HepG2 (cell line): ENCODE measurements at regions of chr16 and their contacts with region 1.

Region 1: DNA sequence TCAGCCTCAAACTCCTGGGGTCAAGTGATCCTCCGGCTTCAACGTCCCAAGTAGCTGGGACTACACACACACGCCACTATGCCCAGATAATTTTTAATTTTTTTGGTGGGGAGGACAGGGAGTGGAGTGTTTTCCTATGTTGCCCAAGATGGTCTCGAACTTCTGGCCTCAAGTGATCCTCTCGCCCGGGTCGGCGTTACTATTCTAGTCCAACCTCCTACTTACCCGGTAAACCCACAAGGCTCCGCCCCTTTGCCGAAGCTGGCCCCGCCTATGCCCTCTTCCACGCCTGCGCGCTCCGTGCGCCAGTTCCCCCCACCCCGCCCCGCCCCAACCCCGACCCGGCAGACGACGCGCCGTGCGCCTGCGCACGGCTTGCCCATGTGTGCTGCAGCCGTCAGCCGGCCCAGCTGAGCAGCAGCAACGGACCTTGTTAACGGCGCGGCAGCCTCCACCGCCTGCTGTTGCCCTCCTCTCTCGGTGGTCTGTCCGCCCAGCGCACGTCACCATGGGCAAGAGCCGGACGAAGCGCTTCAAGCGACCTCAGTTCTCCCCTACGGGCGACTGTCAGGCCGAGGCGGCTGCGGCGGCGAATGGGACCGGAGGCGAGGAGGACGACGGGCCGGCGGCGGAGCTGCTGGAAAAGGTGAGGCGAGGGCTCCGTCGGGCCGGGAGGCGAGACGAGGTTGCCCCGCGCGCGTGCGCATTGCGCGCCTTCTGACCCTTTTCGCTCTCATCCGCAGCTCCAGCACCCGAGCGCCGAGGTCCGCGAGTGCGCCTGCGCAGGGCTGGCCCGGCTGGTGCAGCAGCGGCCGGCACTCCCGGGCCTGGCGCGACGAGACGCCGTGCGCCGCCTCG is at the start of gene HEATR3:
- DNase-seq: peak; percentile 88
- ATAC-seq: peak; percentile 96
- H3K4me3 ChIP-seq: peak within 1 kb of the TSS; percentile 75 to 99 (median 79)
- H3K27ac ChIP-seq: peak within 1 kb of the TSS; percentile 95
- H3K4me1 ChIP-seq: peaks cover 32% of the 10 kb centered on the region
- H3K27me3 ChIP-seq: no peaks in the 10 kb centered on the region; a peak in 1 of 5 replicates
- CTCF ChIP-seq: no peak; the same call in 1 of the 2 replicates
- EP300 ChIP-seq: no peak
- POLR2A ChIP-seq: peak; percentile 69 to 92; a peak in 3 of 4 replicates
- RAD21 ChIP-seq: peak; percentile 71
- total RNA-seq, gene HEATR3: 52.4 and 60.2 TPM in 2 replicates

Region 2: DNA sequence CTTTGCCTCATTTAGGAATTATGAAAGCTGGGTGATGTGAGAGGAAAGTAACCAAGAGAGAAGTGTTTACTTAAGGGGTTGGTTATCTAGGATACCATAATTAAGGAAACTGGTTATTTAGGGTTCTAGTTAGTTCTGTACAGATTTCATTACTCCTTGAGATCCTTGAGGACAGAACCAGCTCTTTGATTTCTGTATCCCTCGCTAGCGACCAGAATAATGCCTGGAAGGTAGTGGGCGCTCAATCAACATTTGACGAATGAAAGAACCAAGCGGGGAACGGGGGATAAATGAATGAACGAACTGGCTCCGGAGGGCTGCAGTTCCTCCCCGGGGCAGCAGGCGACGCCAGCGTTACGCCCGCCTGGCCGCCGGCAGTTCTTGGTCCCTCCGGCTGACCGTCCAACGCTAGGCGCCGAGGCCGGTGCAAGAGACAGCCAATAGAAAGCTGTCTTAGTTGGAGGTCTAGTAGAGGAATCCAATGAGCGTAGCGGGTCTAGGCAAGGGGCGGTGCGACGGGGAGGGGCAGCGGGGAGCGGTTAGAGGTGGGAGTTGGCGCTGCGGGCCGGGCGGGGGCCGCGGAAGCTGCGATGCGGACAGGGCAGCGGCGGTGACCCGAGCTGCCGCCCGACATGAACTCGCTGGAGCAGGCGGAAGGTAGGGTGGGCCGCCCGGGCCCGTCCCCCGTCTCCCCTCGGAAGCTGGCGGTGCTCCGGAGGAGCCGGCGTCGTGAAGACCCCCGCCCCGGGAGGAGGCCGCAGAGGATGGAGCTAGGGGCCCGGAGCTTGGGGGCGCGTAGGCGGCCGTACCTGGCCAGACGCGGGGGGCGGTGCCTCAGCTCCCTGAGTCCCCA is 40.9 kb before region 1 on chr16 and contains the start of gene CNEP1R1:
- CTCF ChIA-PET with region 1: interaction called, 11 read pairs
- POLR2A ChIA-PET with region 1: interaction called, 24 read pairs
- in situ Hi-C with region 1: no loop called
- intact Hi-C with region 1: loop called (anchors 1 kb)
- DNase-seq: peak; percentile 97
- ATAC-seq: peak; percentile 97
- H3K4me3 ChIP-seq: peak within 1 kb of the TSS; percentile 71 to 96 (median 85)
- H3K27ac ChIP-seq: peak within 1 kb of the TSS; percentile 56
- H3K4me1 ChIP-seq: peaks cover 44% of the 10 kb centered on the region
- H3K27me3 ChIP-seq: no peaks in the 10 kb centered on the region; a peak in 2 of 5 replicates
- CTCF ChIP-seq: peak; percentile 100
- EP300 ChIP-seq: peak; percentile 35 to 50; a peak in 2 of 4 replicates
- POLR2A ChIP-seq: peak; percentile 57 to 86
- RAD21 ChIP-seq: peak; percentile 100
- total RNA-seq, gene CNEP1R1: 22.9 and 23.6 TPM in 2 replicates

Region 3: DNA sequence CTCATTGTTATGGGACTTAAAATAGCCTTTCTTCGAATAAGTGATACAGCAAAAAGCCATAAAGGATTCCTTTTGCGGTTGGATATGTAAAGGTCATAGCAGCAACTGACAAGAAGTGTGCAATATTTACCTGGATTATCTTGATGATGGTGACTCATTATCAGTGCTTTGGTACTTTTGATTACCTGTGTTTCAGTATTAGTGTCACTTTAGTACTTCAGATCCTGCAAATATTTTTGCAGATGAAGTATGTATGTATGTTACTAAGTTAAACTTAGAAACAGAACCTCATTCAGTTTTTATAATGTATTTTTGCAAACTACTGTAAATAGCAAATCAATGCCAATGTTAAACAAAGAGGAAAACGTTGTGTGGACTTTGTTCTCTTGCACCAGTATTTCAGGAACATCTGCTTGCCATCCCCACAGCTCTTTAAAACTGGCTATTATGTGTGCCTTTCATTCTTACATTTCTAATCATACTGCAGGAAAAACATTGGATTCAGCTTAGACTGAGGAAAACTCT is 30.3 kb before region 1 on chr16:
- CTCF ChIA-PET with region 1: no interaction called
- POLR2A ChIA-PET with region 1: interaction called, 17 read pairs
- in situ Hi-C with region 1: no loop called
- intact Hi-C with region 1: loop called (anchors 1 kb)
- DNase-seq: peak; percentile 93
- ATAC-seq: peak; percentile 81
- H3K4me3 ChIP-seq: peak overlapping the region in 2 of 3 experiments; percentile 24 to 32; a peak in 1 of 6 replicates
- H3K27ac ChIP-seq: peak overlapping the region; percentile 81
- H3K4me1 ChIP-seq: peaks cover 69% of the 10 kb centered on the region
- H3K27me3 ChIP-seq: no peaks in the 10 kb centered on the region
- CTCF ChIP-seq: no peak
- EP300 ChIP-seq: peak in 1 of 2 experiments; percentile 87; a peak in 2 of 4 replicates
- POLR2A ChIP-seq: no peak
- RAD21 ChIP-seq: no peak

Region 4: DNA sequence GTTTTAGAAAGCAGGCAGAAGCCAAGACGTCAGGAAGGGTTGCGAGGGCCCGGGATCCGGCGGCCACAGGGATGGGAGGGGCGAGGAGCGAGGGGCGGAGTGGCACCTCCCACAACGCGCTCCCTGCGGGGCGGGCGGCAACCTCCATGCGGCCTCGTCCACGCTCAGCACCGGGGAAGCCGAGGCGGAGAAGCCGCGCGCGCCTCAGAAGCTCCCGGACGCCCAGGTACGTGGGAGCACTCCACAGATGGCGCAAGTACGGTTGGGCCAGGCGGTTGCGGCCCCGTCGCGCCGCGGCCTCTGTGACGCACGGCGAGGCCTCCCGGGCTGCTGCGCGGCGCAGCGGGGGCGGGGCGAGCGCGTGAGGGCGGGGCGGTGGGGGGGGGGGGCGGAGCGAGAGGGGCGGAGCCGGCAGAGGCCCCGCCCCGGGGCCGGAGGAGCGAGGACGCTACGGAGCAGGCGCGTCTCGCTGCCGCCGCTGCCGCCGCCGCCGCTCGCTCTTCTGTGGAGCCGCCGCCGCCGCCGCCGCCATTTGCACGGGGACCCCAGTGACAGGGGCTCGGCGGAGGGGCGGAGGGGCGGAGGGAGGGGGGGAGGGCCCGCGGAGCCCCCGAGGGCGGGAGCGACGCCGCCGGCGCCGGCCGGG is 87.1 kb after region 1 on chr16 and contains the start of gene TENT4B:
- CTCF ChIA-PET with region 1: no interaction called
- POLR2A ChIA-PET with region 1: interaction called, 10 read pairs
- in situ Hi-C with region 1: no loop called
- intact Hi-C with region 1: loop called (anchors 1 kb)
- DNase-seq: peak; percentile 62
- ATAC-seq: peak; percentile 68
- H3K4me3 ChIP-seq: peak within 1 kb of the TSS; percentile 98 to 100 (median 98)
- H3K27ac ChIP-seq: peak within 1 kb of the TSS; percentile 96
- H3K4me1 ChIP-seq: peaks cover 44% of the 10 kb centered on the region
- H3K27me3 ChIP-seq: no peaks in the 10 kb centered on the region; a peak in 1 of 5 replicates
- CTCF ChIP-seq: 0 out of 2 replicates have a peak, but pooled peaks have one; percentile 34
- EP300 ChIP-seq: no peak
- POLR2A ChIP-seq: peak; percentile 90 to 91
- RAD21 ChIP-seq: peak; percentile 57
- total RNA-seq, gene TENT4B: 32.8 and 36.0 TPM in 2 replicates

Region 5: GRCh38 chr16:50210266-50211038 is 144.6 kb after region 1 on chr16:
- CTCF ChIA-PET with region 1: no interaction called
- POLR2A ChIA-PET with region 1: interaction called, 6 read pairs
- in situ Hi-C with region 1: no loop called
- intact Hi-C with region 1: loop called (anchors 1 kb)
- DNase-seq: peak; percentile 77
- ATAC-seq: peak; percentile 98
- H3K4me3 ChIP-seq: no peak overlapping the region
- H3K27ac ChIP-seq: no peak overlapping the region
- H3K4me1 ChIP-seq: peaks cover 40% of the 10 kb centered on the region
- H3K27me3 ChIP-seq: no peaks in the 10 kb centered on the region
- CTCF ChIP-seq: peak; percentile 94
- EP300 ChIP-seq: no peak
- POLR2A ChIP-seq: no peak
- RAD21 ChIP-seq: peak; percentile 92